Endothelial cell of umbilical vein (primary cell): ENCODE measurements at regions of chr5 and their contacts with region 1.

Region 1: DNA sequence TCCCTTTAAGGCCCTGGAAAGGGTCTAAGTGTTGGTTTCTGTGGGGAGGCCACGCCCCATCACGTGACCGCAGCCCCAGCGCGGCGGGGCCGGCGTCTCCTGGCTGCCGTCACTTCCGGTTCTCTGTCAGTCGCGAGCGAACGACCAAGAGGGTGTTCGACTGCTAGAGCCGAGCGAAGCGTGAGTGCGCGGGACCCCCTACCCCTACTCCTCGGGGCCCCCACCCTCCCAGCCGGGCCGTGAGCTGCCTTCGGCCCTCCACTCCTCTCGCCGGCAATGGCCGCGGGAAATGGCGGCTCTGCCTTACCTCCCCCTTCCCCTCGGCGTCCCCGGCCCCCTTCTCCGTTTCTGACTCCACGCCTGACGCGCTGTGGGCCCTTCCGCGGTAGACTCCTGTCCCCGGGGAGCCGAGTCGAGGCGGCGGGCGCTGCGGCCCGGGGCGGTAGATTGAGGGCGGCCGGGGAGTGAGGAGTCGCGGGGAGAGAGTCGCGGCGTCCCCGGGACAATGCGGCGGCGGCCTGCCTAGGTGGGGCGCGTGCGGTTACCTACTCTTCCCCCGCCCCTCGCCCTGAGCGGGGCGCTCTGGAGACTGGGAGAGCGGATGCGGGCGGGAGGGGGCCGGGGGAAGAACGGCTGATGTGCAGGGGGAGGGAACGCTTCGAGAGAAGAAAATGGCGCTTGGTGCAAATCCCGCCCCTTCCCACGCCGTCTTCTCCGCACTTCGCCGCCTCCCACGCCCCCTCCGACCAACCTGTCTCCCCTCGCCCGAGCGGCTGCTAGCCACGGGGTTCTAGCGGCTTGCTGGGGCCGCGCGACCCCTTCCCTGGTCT is at the start of gene SUB1:
- DNase-seq: peak; percentile 93
- H3K4me3 ChIP-seq: peak within 1 kb of the TSS; percentile 89 to 99 (median 94)
- H3K27ac ChIP-seq: peak within 1 kb of the TSS; percentile 84
- H3K4me1 ChIP-seq: peaks cover 24% of the 10 kb centered on the region
- H3K27me3 ChIP-seq: no peaks in the 10 kb centered on the region
- CTCF ChIP-seq: no peak
- POLR2A ChIP-seq: peak; percentile 84
- total RNA-seq, gene SUB1: 246 and 252 TPM in 2 replicates

Region 2: DNA sequence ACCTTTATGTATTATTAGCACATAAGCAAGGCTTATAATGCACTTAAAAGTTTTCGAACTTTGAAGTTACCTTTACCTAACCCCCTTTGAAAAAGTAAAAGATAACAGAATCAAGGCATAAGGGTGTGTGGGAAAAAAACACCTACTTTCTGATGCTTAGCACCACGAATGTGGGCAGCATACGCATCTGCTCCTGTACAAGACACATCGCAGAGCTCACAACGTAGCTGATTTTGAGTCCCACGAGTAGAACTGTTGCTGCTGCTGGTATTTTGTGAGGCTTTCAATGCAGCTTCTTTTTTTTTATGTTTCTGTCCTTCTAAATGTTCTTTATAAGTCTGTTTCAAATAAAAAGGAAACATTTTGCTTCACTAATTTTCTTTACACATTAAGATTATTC is 181.9 kb before region 1 on chr5:
- CTCF ChIA-PET with region 1: interaction called, 10 read pairs
- POLR2A ChIA-PET with region 1: no interaction called
- dilution Hi-C with region 1: no loop called
- intact Hi-C with region 1: no loop called
- DNase-seq: no peak
- H3K4me3 ChIP-seq: no peak overlapping the region
- H3K27ac ChIP-seq: no peak overlapping the region
- H3K4me1 ChIP-seq: no peaks in the 10 kb centered on the region
- H3K27me3 ChIP-seq: no peaks in the 10 kb centered on the region
- CTCF ChIP-seq: no peak
- POLR2A ChIP-seq: no peak

Region 3: GRCh38 chr5:32444431-32445286 is 141.0 kb before region 1 on chr5 and contains the start of gene ZFR:
- CTCF ChIA-PET with region 1: interaction called, 6 read pairs
- POLR2A ChIA-PET with region 1: no interaction called
- dilution Hi-C with region 1: no loop called
- intact Hi-C with region 1: loop called (anchors 1 kb)
- DNase-seq: peak; percentile 92
- H3K4me3 ChIP-seq: peak within 1 kb of the TSS; percentile 91 to 98 (median 93)
- H3K27ac ChIP-seq: peak within 1 kb of the TSS; percentile 84
- H3K4me1 ChIP-seq: peaks cover 24% of the 10 kb centered on the region
- H3K27me3 ChIP-seq: no peaks in the 10 kb centered on the region
- CTCF ChIP-seq: no peak
- POLR2A ChIP-seq: peak; percentile 85
- total RNA-seq, gene ZFR: 58.6 and 60.1 TPM in 2 replicates

Region 4: GRCh38 chr5:32498484-32498883 is 87.2 kb before region 1 on chr5:
- CTCF ChIA-PET with region 1: interaction called, 35 read pairs
- POLR2A ChIA-PET with region 1: interaction called, 5 read pairs
- dilution Hi-C with region 1: no loop called
- intact Hi-C with region 1: no loop called
- DNase-seq: no peak
- H3K4me3 ChIP-seq: no peak overlapping the region
- H3K27ac ChIP-seq: no peak overlapping the region
- H3K4me1 ChIP-seq: no peaks in the 10 kb centered on the region
- H3K27me3 ChIP-seq: peaks cover 0 to 3% of the 10 kb centered on the region in 2 experiments
- CTCF ChIP-seq: no peak
- POLR2A ChIP-seq: no peak

Region 5: DNA sequence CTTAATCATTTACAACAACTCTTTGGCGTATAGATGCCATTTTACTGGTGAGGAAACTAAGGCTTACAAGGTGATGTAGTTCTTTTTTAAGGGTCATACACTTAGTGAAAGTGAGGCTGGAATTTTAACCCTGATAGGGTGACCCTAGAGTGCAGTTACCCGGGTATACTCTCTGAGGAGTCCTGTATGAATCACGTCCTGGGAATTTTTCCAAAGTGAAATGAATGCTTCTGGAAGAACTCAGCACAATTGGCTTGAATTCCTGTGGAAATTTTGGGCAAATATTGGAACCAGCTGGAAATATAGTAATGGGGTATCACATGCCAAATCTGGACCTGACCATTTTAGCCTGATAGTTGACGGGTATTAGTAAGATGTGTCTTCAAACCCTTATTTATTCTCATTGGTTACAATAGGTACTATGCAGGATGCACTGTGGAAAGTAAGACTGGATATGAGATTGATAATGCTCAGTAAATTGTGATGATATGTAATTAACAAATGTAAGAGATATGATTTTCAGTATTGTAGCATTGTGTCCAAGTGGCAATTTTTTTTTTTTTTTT is 14.5 kb after region 1 on chr5:
- CTCF ChIA-PET with region 1: interaction called, 20 read pairs
- POLR2A ChIA-PET with region 1: interaction called, 5 read pairs
- dilution Hi-C with region 1: no loop called
- intact Hi-C with region 1: loop called (anchors 1 kb)
- DNase-seq: peak; percentile 81
- H3K4me3 ChIP-seq: no peak overlapping the region
- H3K27ac ChIP-seq: peak overlapping the region; percentile 13
- H3K4me1 ChIP-seq: peaks cover 49% of the 10 kb centered on the region
- H3K27me3 ChIP-seq: no peaks in the 10 kb centered on the region
- CTCF ChIP-seq: no peak
- POLR2A ChIP-seq: no peak